ENCODE measurements at regions of chr10 and their contacts with region 1.

Region 1: GRCh38 chr10:117216611-117217195 is 19.4 kb downstream of the KCNK18 start:
- DNase-seq: peak; percentile 46
- H3K4me3 ChIP-seq: peak overlapping the region; percentile 20 to 43
- H3K27ac ChIP-seq: no peak overlapping the region
- H3K4me1 ChIP-seq: peaks cover 10% of the 10 kb centered on the region
- H3K27me3 ChIP-seq: no peaks in the 10 kb centered on the region
- CTCF ChIP-seq: peak; percentile 99 to 100 (median 100)
- POLR2A ChIP-seq: no peak

Region 2: DNA sequence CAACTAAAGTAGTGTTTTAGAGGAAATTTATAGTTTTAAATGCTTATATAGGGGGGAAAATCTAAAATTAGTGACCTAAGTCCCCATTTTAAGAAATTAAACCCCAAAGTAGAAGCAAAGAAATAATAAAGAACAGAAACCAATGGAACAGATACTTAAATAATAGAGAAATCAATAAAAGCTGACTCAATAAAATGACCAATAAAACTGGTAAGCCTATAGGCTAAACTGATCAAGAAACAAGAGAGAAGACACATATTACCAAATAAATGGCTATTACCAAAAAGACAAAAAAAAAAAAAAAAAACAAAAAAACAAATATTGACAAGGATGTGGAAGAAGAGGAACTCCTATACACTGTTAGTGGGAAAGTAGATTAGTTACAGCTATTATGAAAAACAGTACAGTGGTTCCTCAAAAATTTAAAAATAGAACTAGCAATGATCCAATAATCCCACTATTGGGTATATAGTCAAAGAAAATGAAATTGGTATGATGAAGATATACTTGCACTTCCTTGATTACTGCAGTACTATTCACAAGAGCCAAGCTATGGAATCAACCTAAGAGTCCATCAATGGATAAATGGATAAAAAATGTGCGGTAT is 77.4 kb after region 1 on chr10:
- intact Hi-C with region 1: no loop called
- DNase-seq: no peak
- H3K4me3 ChIP-seq: no peak overlapping the region
- H3K27ac ChIP-seq: no peak overlapping the region
- H3K4me1 ChIP-seq: no peaks in the 10 kb centered on the region
- H3K27me3 ChIP-seq: no peaks in the 10 kb centered on the region
- CTCF ChIP-seq: no peak
- POLR2A ChIP-seq: no peak

Region 3: GRCh38 chr10:117318909-117319308 is 102.2 kb after region 1 on chr10:
- intact Hi-C with region 1: loop called (anchors 10 kb)
- DNase-seq: no peak
- H3K4me3 ChIP-seq: no peak overlapping the region
- H3K27ac ChIP-seq: no peak overlapping the region
- H3K4me1 ChIP-seq: peaks cover 5% of the 10 kb centered on the region
- H3K27me3 ChIP-seq: no peaks in the 10 kb centered on the region
- CTCF ChIP-seq: peak in 1 of 4 experiments; percentile 10
- POLR2A ChIP-seq: no peak

Region 4: GRCh38 chr10:117496616-117497028 is 279.9 kb after region 1 on chr10:
- intact Hi-C with region 1: no loop called
- DNase-seq: peak; percentile 67
- H3K4me3 ChIP-seq: no peak overlapping the region
- H3K27ac ChIP-seq: no peak overlapping the region
- H3K4me1 ChIP-seq: no peaks in the 10 kb centered on the region
- H3K27me3 ChIP-seq: no peaks in the 10 kb centered on the region
- CTCF ChIP-seq: peak; percentile 66 to 94 (median 88)
- POLR2A ChIP-seq: no peak

Measured in prostate gland (tissue), 2 donors.